Astrocyte of the cerebellum (primary cell): ENCODE measurements at regions of chr17 and their contacts with region 1.

Region 1: DNA sequence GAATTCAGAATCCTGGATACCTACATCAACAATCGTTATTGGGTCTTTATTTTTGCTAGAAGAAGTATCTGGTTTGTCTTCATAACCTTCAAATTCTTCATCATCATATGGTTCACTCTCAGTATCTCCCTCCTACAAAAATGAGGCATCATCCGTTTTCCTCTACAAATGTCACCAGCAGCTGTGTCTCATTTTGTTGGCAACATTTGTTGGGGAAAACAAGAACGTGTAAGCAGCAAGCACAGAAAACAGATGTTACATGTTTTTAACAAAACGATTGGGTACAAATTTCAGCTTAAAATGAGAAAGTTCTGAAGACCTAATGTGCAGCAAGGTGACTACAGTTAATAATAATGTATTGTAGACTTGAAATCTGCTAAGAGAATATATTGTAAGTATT is 8.7 kb downstream of the CCDC47 start:
- DNase-seq: no peak
- H3K4me3 ChIP-seq: no peak overlapping the region
- CTCF ChIP-seq: no peak

Region 2: GRCh38 chr17:63714547-63715277 is 50.0 kb before region 1 on chr17:
- in situ Hi-C with region 1: loop called (anchors 5 kb)
- DNase-seq: no peak
- H3K4me3 ChIP-seq: no peak overlapping the region
- CTCF ChIP-seq: no peak

Region 3: DNA sequence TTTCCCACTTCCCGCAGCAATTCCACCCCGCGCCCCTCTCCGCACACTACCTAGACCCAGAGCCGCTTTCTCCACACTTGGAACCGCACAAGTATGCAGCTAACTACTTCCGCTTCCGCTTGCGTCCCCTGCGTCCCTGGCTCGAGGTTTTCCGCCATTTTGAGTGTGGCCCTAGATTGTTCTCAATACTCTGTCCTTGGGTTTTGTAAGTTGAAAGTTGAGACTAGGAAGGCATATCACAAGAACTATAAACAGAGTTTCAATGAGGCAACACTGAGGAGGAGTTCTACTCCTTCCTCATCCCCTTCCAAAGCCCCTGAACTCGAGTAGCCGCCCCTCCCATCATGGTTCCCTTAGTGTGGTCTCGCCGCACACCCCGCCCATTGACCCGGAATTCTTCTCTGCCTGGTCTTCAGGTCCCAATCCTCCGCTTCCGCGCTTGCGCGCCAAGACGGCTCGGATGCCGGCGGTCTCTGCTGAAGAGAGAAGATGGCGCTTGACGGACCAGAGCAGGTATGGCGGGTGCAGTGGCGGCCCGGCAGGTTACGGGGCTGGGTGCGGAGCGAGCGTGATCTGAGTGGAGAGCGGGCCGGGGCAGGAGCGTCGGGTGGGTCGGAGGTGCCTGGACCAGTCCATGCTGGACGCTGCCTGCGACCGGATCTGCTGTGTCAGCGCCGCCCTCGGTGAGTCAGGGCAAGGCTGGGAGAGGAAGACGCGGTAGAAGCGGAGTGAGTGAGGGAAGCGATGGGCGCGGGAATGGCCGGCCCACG is 62.5 kb after region 1 on chr17 and contains the starts of genes FTSJ3 and PSMC5:
- in situ Hi-C with region 1: no loop called
- DNase-seq: peak; percentile 91
- H3K4me3 ChIP-seq: peak within 1 kb of the TSS; percentile 98
- CTCF ChIP-seq: peak; percentile 48